ENCODE measurements at regions of chr16 and their contacts with region 1.

Region 1: DNA sequence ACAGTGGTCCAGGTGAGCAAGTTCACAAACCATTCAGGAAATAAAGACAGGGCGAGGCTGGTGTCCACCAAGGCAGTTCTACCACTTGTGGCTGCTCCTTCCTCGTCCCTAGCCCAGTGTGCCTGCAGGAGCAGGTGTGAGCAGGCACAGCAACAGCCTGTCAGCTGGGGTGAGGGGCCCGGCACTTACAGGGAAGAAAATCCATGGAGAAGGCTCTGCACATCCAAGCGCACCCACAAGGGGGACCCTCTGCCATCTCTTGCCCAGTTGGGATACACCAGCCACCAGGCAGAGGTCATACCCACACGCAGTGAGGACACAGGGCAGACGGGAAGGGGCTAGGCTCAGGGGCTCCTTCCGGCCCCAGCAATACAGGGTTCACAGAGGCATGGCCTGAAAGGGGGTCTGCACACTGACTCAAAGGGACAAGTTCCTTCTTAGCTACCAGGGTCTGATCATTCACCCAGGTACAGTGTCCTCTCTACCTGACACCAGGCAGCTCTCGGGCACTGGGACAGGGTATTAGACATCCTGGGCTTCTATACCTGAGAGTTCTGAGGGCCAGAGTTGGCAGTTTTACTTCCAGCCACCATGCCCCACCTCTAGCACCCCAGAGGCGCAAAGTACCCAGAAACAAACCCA is 27.0 kb downstream of the CDIP1 start:
- DNase-seq: peak in 1 of 4 donors; percentile 40
- ATAC-seq: peak; percentile 39
- H3K4me3 ChIP-seq: no peak overlapping the region
- H3K27ac ChIP-seq: no peak overlapping the region
- H3K4me1 ChIP-seq: peaks cover 22 to 55% of the 10 kb centered on the region in 2 donors
- H3K27me3 ChIP-seq: no peaks in the 10 kb centered on the region
- CTCF ChIP-seq: peak; percentile 13 to 14

Region 2: GRCh38 chr16:3793161-3793576 is 718.4 kb before region 1 on chr16:
- intact Hi-C with region 1: no loop called
- DNase-seq: no peak
- ATAC-seq: peak; percentile 44
- H3K4me3 ChIP-seq: no peak overlapping the region
- H3K27ac ChIP-seq: no peak overlapping the region
- H3K4me1 ChIP-seq: peaks cover 7 to 26% of the 10 kb centered on the region in 2 donors
- H3K27me3 ChIP-seq: no peaks in the 10 kb centered on the region
- CTCF ChIP-seq: no peak

Region 3: GRCh38 chr16:4580245-4580644 is 68.7 kb after region 1 on chr16:
- intact Hi-C with region 1: loop called in 1 of 2 experiments (anchors 10 kb)
- DNase-seq: no peak
- ATAC-seq: peak; percentile 50
- H3K4me3 ChIP-seq: no peak overlapping the region
- H3K27ac ChIP-seq: no peak overlapping the region
- H3K4me1 ChIP-seq: peaks cover 0 to 1% of the 10 kb centered on the region in 2 donors
- H3K27me3 ChIP-seq: peaks cover 0 to 1% of the 10 kb centered on the region in 2 donors
- CTCF ChIP-seq: no peak

Measured in left lung (tissue), 14 donors.